Breast epithelium (tissue), 4 donors: ENCODE measurements at regions of chrX and their contacts with region 1.

Region 1: GRCh38 chrX:70066646-70067045 is 4.4 kb downstream of the OTUD6A start:
- DNase-seq: no peak
- H3K4me3 ChIP-seq: no peak overlapping the region
- H3K27ac ChIP-seq: no peak overlapping the region
- H3K4me1 ChIP-seq: no peaks in the 10 kb centered on the region
- H3K27me3 ChIP-seq: peaks cover 0 to 51% of the 10 kb centered on the region in 2 donors
- CTCF ChIP-seq: no peak
- POLR2A ChIP-seq: no peak

Region 2: DNA sequence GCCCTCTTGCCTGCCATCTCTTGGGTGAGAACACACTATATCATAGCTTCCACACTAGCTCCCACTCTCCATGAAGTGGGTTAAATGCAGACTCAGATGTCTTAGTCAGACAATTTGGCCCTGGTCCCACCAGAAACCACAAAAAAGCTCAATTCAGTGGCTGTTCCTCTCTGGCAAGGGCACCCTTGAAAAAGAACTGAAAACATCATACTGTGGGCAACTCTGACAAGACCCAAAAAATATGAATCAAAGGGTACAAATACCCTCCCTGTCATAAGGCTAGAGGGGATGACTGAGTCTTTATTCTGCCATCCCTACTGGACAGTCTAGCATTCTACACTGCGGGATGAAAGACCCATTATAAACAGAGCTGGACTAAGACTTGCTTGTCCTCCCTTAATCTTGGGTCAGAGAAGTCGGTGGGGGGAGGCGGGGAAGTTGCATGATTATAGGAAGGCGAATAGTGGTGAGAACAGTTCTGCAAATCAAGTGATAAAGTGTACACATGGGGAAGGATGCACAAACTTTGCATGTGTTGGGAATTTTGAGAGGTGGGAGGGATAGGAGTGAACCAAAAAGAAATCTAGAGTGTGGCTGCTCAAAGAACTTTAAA is 1805.5 kb before region 1 on chrX:
- intact Hi-C with region 1: no loop called
- DNase-seq: no peak
- H3K4me3 ChIP-seq: no peak overlapping the region
- H3K27ac ChIP-seq: no peak overlapping the region
- H3K4me1 ChIP-seq: no peaks in the 10 kb centered on the region
- H3K27me3 ChIP-seq: peaks cover 0 to 23% of the 10 kb centered on the region in 2 donors
- CTCF ChIP-seq: no peak
- POLR2A ChIP-seq: no peak

Region 3: GRCh38 chrX:70079870-70080269 is 13.2 kb after region 1 on chrX:
- intact Hi-C with region 1: no loop called
- DNase-seq: no peak
- H3K4me3 ChIP-seq: no peak overlapping the region
- H3K27ac ChIP-seq: no peak overlapping the region
- H3K4me1 ChIP-seq: no peaks in the 10 kb centered on the region
- H3K27me3 ChIP-seq: peaks cover 0 to 39% of the 10 kb centered on the region in 2 donors
- CTCF ChIP-seq: no peak
- POLR2A ChIP-seq: no peak

Region 4: GRCh38 chrX:70105229-70105628 is 38.6 kb after region 1 on chrX:
- intact Hi-C with region 1: loop called (anchors 2 kb)
- DNase-seq: no peak
- H3K4me3 ChIP-seq: no peak overlapping the region
- H3K27ac ChIP-seq: no peak overlapping the region
- H3K4me1 ChIP-seq: no peaks in the 10 kb centered on the region
- H3K27me3 ChIP-seq: peaks cover 0 to 21% of the 10 kb centered on the region in 2 donors
- CTCF ChIP-seq: no peak
- POLR2A ChIP-seq: no peak